Sigmoid colon (tissue), 7 donors: ENCODE measurements at regions of chr16 and their contacts with region 1.

Region 1: DNA sequence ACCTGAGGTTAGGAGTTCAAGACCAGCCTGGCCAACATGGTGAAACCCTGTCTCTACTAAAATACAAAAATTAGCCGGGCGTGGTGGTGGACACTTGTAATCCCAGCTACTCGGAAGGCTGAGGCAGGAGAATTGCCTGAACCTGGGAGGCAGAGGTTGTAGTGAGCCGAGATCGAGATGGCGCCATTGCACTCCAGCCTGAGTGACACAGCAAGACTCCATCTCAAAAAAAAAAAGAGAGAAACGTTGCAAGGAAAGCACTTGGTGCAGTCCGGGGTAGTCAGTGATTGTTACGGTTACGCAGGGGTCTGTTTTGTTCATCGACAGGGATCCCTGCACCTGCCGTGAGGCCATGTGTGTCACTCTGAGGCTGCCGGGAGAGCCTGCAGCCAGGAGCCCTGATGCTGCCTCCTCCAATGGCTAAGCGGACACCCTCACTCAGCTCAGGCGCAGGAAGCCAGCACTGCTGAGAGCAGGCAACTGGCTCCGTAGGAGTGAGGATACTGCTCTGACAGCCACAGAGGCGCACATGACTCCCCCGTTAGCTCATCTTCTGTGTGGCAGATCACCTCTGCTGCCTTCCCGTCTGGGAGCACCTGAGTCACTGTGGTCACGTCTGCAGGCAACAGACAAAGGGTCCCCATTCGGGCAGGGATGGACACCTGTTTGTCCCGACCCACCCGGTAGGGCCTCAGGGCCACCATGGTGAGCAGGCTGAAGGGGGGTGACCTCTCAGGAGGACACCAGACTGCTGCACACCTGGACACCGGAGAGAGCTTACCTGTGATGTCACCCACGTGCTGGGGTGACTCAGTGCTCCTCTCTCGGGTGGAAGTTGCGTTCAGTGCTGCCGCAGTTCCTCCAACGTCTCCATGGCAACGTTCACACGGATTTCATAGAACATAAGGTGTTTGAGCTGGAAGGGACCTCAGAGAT is 5.2 kb upstream of the RAB26 start:
- DNase-seq: no peak
- H3K4me3 ChIP-seq: no peak overlapping the region
- H3K27ac ChIP-seq: no peak overlapping the region
- H3K4me1 ChIP-seq: peaks cover 0 to 16% (median 9%) of the 10 kb centered on the region in 4 donors
- H3K27me3 ChIP-seq: no peaks in the 10 kb centered on the region
- CTCF ChIP-seq: no peak
- EP300 ChIP-seq: no peak
- POLR2A ChIP-seq: no peak

Region 2: GRCh38 chr16:2121853-2122252 is 21.4 kb before region 1 on chr16:
- intact Hi-C with region 1: loop called (anchors 1 kb)
- DNase-seq: peak; percentile 89
- H3K4me3 ChIP-seq: peak overlapping the region in 3 of 4 donors; percentile 33 to 47 (median 39)
- H3K27ac ChIP-seq: peak overlapping the region; percentile 84 to 99 (median 96)
- H3K4me1 ChIP-seq: peaks cover 0 to 85% (median 81%) of the 10 kb centered on the region in 4 donors
- H3K27me3 ChIP-seq: no peaks in the 10 kb centered on the region
- CTCF ChIP-seq: no peak
- EP300 ChIP-seq: no peak
- POLR2A ChIP-seq: no peak

Region 3: DNA sequence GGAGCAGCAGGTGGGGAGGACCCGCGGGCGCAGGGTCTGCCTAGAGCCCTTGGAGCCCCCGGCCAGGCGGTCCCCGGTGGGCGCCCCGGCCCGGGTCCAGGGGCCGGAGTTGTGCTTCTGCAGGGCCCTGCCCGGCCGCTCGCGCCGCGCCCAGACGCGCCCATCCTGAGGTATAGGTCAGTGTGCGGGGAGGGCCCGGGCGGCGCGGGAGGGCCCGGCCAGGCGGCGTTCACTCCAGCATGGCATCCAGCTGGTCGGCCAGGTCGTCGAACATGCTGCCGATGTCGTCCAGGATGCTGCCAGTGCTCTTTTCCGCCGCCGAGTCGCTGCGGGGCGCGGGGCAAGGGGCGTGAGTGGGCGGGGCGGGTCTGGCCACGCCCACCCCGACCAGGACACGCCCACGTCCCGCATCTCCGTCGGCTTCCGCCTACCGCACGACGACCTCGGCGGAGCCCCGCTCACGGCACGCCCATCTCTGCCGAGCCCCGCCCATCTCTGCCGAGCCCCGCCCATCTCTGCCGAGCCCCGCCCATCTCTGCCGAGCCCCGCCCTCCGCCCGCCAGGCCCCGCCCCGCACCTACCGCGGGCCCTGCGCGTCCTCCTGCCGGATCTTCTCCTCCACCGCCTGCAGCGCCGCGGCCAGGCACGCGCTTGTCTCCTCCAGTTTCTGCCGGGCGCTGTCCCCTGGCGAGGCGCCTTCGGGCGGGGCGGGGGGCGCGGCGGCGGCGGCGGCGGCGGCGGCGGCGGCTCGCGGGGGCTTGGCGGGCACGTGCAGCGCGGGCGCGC is 35.3 kb after region 1 on chr16:
- intact Hi-C with region 1: no loop called
- DNase-seq: no peak
- H3K4me3 ChIP-seq: no peak overlapping the region
- H3K27ac ChIP-seq: no peak overlapping the region
- H3K4me1 ChIP-seq: peaks cover 0 to 5% (median 0%) of the 10 kb centered on the region in 4 donors
- H3K27me3 ChIP-seq: peaks cover 0 to 8% (median 0%) of the 10 kb centered on the region in 3 donors
- CTCF ChIP-seq: no peak
- EP300 ChIP-seq: no peak
- POLR2A ChIP-seq: no peak